ENCODE measurements at regions of chr3 and their contacts with region 1.

Region 1: GRCh38 chr3:7100136-7100535 is 239.2 kb downstream of the GRM7 start:
- DNase-seq: no peak

Region 2: GRCh38 chr3:7263347-7264195 is 163.4 kb after region 1 on chr3:
- intact Hi-C with region 1: loop called in 1 of 2 experiments (anchors 10 kb)
- DNase-seq: no peak

Measured in posterior vena cava (tissue), 2 donors.